ENCODE measurements at regions of chr2 and their contacts with region 1.

Region 1: GRCh38 chr2:191051825-191052778 is 38.1 kb upstream of the STAT1 start:
- DNase-seq: peak; percentile 45
- ATAC-seq: peak; percentile 78
- H3K4me3 ChIP-seq: no peak overlapping the region
- H3K27ac ChIP-seq: no peak overlapping the region
- H3K4me1 ChIP-seq: peaks cover 0 to 8% of the 10 kb centered on the region in 2 experiments; a peak in 1 of 4 replicates
- H3K27me3 ChIP-seq: no peaks in the 10 kb centered on the region
- CTCF ChIP-seq: peak; percentile 54 to 83 (median 73); a peak in 5 of 6 replicates
- POLR2A ChIP-seq: no peak
- RAD21 ChIP-seq: peak; percentile 86

Region 2: DNA sequence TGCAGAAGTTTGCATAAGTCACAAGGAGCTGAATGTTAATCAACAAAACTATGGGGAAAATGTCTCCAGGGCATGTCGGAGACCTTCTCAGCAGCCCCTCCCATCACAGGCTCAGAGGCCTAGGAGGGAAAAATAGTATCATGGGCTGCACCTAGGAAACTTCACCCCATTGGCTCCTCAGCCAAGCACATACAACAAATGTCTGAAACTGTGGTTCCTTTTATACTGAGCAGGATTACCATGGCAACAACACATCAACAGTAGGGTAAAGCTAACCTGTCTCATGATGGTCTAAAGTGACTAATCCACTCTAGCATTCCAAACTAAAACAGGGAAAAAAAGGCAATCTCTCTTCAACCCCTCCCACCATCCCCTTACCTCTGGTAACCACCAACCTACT is 514.3 kb before region 1 on chr2:
- CTCF ChIA-PET with region 1: no interaction called
- POLR2A ChIA-PET with region 1: no interaction called
- RAD21 ChIA-PET with region 1: no interaction called
- intact Hi-C with region 1: no loop called
- DNase-seq: no peak
- ATAC-seq: no peak
- H3K4me3 ChIP-seq: no peak overlapping the region
- H3K27ac ChIP-seq: no peak overlapping the region
- H3K4me1 ChIP-seq: peaks cover 8 to 30% of the 10 kb centered on the region in 2 experiments; a peak in 3 of 4 replicates
- H3K27me3 ChIP-seq: no peaks in the 10 kb centered on the region
- CTCF ChIP-seq: no peak
- POLR2A ChIP-seq: no peak
- RAD21 ChIP-seq: no peak

Region 3: DNA sequence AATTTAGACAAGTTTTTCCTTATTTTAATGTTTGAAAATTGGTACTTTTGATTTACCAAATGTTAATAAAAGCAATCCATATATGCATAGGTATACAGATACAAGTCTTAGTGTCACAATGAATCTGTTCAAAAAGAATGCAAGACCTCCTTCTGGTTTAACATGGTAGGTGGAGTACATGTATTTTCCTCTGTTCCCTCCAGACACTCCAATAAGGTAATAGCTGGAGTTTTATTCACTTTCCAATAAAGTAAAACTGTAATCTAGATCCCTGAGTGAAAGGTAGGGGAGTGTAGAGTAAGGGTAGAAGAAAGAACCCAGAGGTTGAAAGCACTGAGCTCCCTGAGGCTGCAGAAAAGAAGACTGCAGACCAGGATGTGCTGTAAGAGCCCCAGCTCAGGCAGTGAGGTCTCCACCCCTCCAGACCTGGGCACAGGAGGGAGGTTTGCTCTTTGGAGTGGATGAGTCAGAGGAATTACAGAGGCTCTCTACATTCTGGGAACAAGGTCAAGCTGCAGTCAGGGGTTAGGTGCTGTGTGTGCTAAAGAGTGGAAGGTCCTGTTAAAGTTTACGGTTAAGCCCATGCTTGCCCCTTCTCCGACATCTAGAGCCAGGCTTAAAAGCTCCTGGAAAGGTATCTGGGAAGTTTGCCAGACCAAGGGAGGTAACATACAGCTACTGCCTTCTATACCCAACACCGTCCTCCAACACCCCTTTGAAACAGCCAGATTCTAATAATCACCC is 10.5 kb before region 1 on chr2:
- CTCF ChIA-PET with region 1: interaction called, 23 read pairs
- POLR2A ChIA-PET with region 1: interaction called, 9 read pairs
- RAD21 ChIA-PET with region 1: no interaction called
- intact Hi-C with region 1: no loop called
- DNase-seq: peak; percentile 63
- ATAC-seq: peak; percentile 99
- H3K4me3 ChIP-seq: peak overlapping the region in 1 of 2 experiments; percentile 37; a peak in 3 of 4 replicates
- H3K27ac ChIP-seq: peak overlapping the region; percentile 33
- H3K4me1 ChIP-seq: peaks cover 12 to 26% of the 10 kb centered on the region in 2 experiments
- H3K27me3 ChIP-seq: no peaks in the 10 kb centered on the region
- CTCF ChIP-seq: no peak
- POLR2A ChIP-seq: no peak
- RAD21 ChIP-seq: peak; percentile 22

Region 4: DNA sequence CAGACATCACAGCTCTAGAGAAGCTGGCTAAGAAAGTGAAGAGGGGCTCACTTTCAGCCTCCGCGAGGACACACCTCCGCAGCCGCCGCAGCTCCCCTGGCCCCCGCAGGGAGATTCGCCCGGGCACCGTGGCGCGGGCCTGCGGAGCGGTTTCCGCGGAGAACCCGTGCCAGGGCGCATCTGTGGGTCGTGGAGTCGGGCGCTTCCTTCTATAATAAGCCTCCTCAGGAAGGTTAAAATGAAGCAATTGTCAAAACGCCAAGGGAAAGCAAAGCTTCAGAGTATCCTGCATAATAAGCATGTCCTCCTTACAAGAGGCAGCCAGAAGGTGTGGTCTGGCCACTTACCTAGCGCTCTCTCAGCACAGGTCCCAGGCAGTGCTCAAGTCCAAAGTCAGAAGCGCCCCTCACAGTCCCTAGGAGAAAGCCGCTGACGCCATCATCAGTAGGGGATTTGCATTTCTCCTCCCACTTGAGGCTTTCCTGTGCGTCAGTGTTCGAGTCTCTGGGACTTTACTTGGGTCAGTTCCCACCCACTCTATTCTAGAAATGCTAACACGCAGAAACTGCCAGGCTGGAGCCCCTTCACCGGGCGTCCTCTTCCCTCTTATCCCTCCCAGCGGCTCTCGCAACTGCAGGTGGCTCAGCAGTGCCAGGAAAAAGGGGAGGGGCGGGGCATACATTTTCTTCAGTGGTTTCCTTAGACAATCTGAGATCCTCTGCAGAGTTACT is 98.7 kb after region 1 on chr2 and contains the start of gene STAT4:
- CTCF ChIA-PET with region 1: interaction called, 171 read pairs
- POLR2A ChIA-PET with region 1: interaction called, 9 read pairs
- RAD21 ChIA-PET with region 1: interaction called, 15 to 18 read pairs
- intact Hi-C with region 1: loop called (anchors 1 kb)
- DNase-seq: peak; percentile 57
- ATAC-seq: peak; percentile 89
- H3K4me3 ChIP-seq: peak within 1 kb of the TSS; percentile 63 to 70
- H3K27ac ChIP-seq: peak within 1 kb of the TSS; percentile 1
- H3K4me1 ChIP-seq: peaks cover 0 to 9% of the 10 kb centered on the region in 2 experiments; a peak in 2 of 4 replicates
- H3K27me3 ChIP-seq: no peaks in the 10 kb centered on the region
- CTCF ChIP-seq: no peak
- POLR2A ChIP-seq: no peak
- RAD21 ChIP-seq: no peak
- total RNA-seq, gene STAT4: 2.0 TPM

Region 5: DNA sequence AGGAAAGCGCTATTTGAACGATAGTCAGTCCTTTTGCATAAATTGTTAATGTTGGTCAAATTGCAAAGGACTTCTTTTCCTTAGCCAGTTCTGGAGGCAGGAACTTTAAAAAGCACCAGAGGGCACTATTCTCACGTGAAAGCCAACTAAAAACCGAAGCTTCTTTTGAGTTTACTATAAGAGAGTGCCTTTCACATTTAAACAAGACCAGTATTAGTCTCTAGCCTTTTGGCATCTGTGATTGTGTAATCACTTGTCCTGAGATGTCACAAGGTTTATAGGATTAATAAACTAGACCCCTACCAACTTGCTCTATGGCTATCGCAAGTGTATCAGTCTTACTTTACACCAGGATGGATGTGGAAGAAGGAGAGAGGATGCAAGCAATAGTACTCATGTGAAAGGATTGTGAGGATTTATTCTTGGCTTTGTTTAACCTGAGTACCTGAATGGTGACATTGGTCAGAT is 113.1 kb after region 1 on chr2:
- CTCF ChIA-PET with region 1: interaction called, 18 read pairs
- POLR2A ChIA-PET with region 1: no interaction called
- RAD21 ChIA-PET with region 1: interaction called in 1 of 2 experiments, 6 read pairs
- intact Hi-C with region 1: no loop called
- DNase-seq: peak; percentile 36
- ATAC-seq: peak; percentile 94
- H3K4me3 ChIP-seq: no peak overlapping the region
- H3K27ac ChIP-seq: no peak overlapping the region
- H3K4me1 ChIP-seq: peaks cover 2 to 12% of the 10 kb centered on the region in 2 experiments; a peak in 1 of 4 replicates
- H3K27me3 ChIP-seq: no peaks in the 10 kb centered on the region
- CTCF ChIP-seq: peak; percentile 50 to 87 (median 86)
- POLR2A ChIP-seq: no peak
- RAD21 ChIP-seq: peak; percentile 89

Region 6: GRCh38 chr2:191501561-191502168 is 449.6 kb after region 1 on chr2:
- CTCF ChIA-PET with region 1: interaction called, 8 read pairs
- POLR2A ChIA-PET with region 1: no interaction called
- RAD21 ChIA-PET with region 1: no interaction called
- intact Hi-C with region 1: loop called (anchors 5 kb)
- DNase-seq: peak; percentile 37
- ATAC-seq: peak; percentile 61; the same call in 1 of the 2 replicates
- H3K4me3 ChIP-seq: no peak overlapping the region
- H3K27ac ChIP-seq: no peak overlapping the region
- H3K4me1 ChIP-seq: no peaks in the 10 kb centered on the region
- H3K27me3 ChIP-seq: no peaks in the 10 kb centered on the region
- CTCF ChIP-seq: peak; percentile 40 to 85 (median 69)
- POLR2A ChIP-seq: no peak
- RAD21 ChIP-seq: peak; percentile 88

Measured in HCT116 (cell line).